ENCODE measurements at regions of chr5 and their contacts with region 1.

Region 1: DNA sequence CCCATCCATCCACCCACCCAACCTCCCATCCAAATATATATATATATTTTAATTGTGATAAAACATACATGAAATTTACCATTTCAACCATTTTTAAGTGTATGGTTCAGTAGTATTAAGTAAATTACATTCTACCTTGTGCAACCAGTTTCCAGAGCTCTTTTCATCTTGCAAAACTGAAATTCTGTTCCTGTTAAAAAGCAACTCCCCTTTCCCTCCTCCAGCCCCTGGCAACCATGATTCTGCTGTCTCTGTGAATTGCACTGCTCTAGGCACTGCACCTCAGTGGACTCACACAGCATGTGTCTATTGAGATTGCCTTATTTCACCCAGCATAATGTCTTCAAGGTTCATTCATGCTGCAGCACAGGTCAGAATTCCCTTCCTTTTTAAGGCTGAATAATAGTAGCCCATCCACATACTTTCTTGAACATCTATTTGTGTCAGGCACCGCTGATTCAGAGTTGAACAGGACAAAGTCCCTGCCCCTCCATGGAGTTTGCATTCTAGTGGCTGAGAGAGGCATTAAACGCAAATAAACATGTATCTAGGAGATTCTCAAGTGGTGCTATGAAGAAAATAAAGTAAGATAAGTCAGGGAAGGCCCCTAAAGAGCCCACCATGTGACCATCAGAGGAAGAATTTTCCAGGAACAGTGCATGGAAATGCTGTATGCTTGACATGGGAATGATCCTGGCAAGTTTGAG is 24.0 kb downstream of the CSF1R start:
- DNase-seq: no peak
- H3K4me3 ChIP-seq: no peak overlapping the region
- H3K27ac ChIP-seq: no peak overlapping the region
- H3K4me1 ChIP-seq: peaks cover 15% of the 10 kb centered on the region
- H3K27me3 ChIP-seq: no peaks in the 10 kb centered on the region
- CTCF ChIP-seq: no peak

Region 2: GRCh38 chr5:150106674-150107426 is 44.5 kb after region 1 on chr5:
- CTCF ChIA-PET with region 1: no interaction called
- dilution Hi-C with region 1: loop called (anchors 5 kb)
- in situ Hi-C with region 1: no loop called
- intact Hi-C with region 1: no loop called
- DNase-seq: no peak
- H3K4me3 ChIP-seq: no peak overlapping the region
- H3K27ac ChIP-seq: no peak overlapping the region
- H3K4me1 ChIP-seq: peaks cover 12% of the 10 kb centered on the region
- H3K27me3 ChIP-seq: no peaks in the 10 kb centered on the region
- CTCF ChIP-seq: no peak

Measured in mammary epithelial cell (primary cell).